Activated CD4-positive, alpha-beta T cell treated with anti-CD3 and anti-CD28 coated beads for 36 hours (primary cell): ENCODE measurements at regions of chr1 and their contacts with region 1.

Region 1: DNA sequence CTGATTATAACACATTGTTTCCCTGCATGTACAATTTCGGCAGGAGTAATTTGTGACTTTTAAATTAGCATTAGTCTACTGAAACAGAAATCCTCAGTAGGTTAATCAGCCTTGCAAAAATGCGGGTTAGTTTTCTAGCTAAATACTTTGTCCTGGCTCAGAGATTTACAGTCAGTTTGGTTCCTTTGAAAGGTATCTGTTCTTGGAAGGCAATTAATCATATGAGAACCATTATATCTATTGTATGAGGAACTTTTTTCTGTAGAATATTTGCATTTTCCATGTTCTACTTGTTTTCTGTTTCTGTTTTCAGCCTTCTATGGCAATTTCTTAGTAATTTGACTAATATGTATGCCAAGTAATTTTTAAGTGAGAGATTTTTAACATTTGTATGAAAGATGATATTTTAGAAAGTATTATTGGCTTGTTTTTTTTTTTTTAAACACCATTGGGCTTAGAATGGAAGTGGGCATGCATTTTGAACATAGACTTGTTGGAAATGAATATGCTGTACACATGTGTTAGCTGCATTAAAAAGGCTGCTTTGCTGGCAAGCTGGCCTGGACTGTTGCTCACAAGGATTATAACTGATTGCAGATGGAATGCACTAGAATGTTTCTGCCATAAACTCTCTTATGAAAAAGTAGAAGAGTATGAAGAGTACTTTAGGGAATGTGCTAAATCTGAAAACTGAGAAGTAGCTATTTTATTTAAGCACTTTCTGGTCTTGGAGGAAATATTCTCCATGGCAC is 26.2 kb downstream of the KIF1B start:
- DNase-seq: no peak
- ATAC-seq: peak; percentile 51
- H3K4me3 Mint-ChIP-seq: no peak overlapping the region
- H3K27ac Mint-ChIP-seq: peak overlapping the region; percentile 56
- H3K4me1 Mint-ChIP-seq: peaks cover 17% of the 10 kb centered on the region
- H3K27me3 Mint-ChIP-seq: no peaks in the 10 kb centered on the region

Region 2: DNA sequence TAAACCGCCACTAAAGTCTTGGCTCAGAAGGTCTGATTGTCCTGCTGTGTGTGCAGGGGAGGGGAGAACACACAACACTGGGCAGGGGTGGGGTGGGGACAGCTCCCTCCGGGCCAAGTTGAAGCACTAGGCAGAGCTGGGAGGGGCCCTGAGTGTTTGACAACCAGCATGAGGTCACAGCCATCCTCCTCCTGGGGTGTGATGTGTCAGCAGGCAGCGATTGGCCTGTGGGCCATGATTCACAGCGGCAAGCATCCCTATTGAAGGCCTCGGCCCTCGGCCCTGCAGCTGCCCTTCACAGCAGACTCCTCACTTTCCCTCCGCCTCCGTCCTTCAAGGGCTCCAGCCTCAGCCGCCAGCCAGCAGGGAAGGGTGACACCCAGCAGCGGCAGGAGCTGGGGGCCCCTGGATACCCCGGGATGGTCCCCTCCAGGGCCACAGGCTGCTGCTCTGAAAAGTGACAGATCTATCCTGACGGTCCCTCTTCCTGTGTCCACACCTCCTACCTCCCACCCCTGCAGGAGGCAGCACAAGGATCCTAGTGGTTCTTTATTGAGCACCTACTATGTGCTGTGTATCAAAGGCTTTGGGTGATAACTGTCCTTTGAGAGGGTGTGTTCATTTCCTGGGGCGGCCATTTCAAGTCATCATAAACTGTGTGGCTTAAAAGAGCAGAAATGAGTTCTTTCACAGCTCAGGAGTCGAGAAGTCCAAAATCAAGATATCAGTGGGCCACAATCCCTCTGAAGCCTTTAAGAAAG is 763.4 kb before region 1 on chr1:
- CTCF ChIA-PET with region 1: no interaction called
- POLR2A ChIA-PET with region 1: no interaction called
- intact Hi-C with region 1: no loop called
- DNase-seq: peak; percentile 42
- ATAC-seq: peak; percentile 74
- H3K4me3 Mint-ChIP-seq: no peak overlapping the region
- H3K27ac Mint-ChIP-seq: no peak overlapping the region
- H3K4me1 Mint-ChIP-seq: no peaks in the 10 kb centered on the region
- H3K27me3 Mint-ChIP-seq: peaks cover 13% of the 10 kb centered on the region

Region 3: DNA sequence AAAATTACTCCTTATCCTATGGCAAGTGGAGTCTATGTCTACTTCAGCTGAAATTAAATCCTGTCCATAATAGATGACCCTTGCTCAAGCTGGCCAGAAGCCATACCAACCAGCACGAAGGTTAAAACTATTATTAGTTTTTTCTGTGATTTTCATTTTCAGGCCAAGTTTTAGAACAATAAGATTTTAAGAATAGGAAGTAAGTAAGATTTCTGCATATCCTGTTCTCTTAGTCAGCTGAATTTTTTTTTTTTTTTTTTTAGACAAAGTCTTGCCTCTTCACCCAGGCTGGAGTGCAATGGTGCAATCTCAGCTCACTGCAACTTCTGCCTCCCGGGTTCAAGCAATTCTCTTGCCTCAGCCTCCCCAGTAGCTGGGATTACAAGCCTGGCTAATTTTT is 245.6 kb before region 1 on chr1:
- CTCF ChIA-PET with region 1: no interaction called
- POLR2A ChIA-PET with region 1: no interaction called
- intact Hi-C with region 1: no loop called
- DNase-seq: no peak
- ATAC-seq: no peak
- H3K4me3 Mint-ChIP-seq: no peak overlapping the region
- H3K27ac Mint-ChIP-seq: no peak overlapping the region
- H3K4me1 Mint-ChIP-seq: no peaks in the 10 kb centered on the region
- H3K27me3 Mint-ChIP-seq: peaks cover 7% of the 10 kb centered on the region

Region 4: DNA sequence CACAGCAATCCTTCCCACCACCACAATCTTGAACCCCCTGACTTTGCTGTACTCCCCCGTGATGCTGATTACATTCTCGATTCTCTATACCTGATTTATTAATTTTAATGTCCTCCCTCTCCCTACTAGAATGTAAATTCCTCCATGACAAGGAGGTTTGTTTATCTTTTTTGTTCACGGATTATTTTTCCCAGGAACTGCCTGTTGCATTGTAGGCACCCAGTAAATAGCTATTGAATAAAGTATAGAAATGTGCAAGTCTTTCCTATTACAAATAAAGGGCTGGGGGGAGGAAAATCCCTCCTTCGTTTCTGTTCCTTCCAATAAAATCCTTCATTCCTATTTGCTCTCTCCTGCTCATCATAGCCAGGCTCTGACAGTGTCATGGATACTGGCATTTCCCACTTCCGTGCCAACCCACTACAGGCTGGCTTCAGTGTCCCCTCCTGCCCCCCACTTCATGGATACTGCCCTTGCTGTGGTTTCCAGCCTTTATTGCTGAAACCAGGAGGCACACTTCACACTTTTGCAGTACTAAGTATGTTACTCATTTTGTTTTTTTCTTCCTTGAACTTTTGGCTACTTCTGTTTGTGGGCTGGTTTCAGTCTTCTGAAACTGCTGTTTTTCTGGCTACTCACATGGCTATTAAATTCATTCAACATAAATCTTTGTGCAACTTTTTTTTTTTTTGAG is 18.7 kb before region 1 on chr1:
- CTCF ChIA-PET with region 1: interaction called, 4 read pairs
- POLR2A ChIA-PET with region 1: no interaction called
- intact Hi-C with region 1: loop called in 1 of 2 experiments (anchors 2 kb)
- DNase-seq: peak; percentile 10
- ATAC-seq: peak; percentile 55
- H3K4me3 Mint-ChIP-seq: no peak overlapping the region
- H3K27ac Mint-ChIP-seq: peak overlapping the region; percentile 40
- H3K4me1 Mint-ChIP-seq: peaks cover 34% of the 10 kb centered on the region
- H3K27me3 Mint-ChIP-seq: no peaks in the 10 kb centered on the region

Region 5: GRCh38 chr1:10324627-10325026 is 88.0 kb after region 1 on chr1:
- CTCF ChIA-PET with region 1: no interaction called
- POLR2A ChIA-PET with region 1: interaction called, 12 read pairs
- intact Hi-C with region 1: no loop called
- DNase-seq: peak; percentile 18
- ATAC-seq: peak; percentile 55
- H3K4me3 Mint-ChIP-seq: peak overlapping the region; percentile 30
- H3K27ac Mint-ChIP-seq: peak overlapping the region; percentile 16
- H3K4me1 Mint-ChIP-seq: peaks cover 6% of the 10 kb centered on the region
- H3K27me3 Mint-ChIP-seq: no peaks in the 10 kb centered on the region